ENCODE measurements at regions of chr12 and their contacts with region 1.

Region 1: DNA sequence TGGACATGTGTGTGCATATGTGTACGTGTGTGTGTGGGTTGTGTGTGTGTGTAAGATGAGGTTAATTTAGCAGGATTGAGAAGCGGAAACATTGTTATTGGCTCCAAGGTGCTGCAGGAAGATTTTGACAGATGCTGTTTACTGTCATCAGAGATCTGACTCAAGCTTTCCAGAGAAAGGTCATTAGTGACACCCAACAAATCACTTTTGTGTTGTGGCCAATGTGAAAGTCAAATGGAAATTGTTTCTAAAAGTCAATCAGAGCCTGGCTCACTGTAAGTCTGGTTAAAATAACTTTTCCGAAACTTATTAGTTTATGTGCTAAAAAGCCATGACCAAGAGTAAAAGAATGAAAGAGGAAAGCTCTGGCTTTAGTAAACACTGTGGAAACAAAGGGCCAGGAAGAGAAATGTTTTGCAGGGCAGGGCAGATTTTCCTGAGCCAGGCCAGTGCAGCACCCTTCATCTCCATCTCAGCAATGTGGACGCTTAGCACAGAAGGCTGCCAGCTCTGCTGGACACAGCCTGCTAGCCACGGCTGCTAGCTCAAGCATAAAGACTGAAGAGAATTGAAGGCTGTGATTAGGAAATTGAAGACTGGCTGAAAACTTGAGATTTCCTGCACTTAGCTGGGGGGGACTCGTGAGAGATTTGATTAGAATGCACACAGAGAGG is 235.8 kb downstream of the NEDD1 start:
- DNase-seq: peak; percentile 88
- H3K4me3 ChIP-seq: peak overlapping the region in 1 of 3 experiments; percentile 5
- H3K27ac ChIP-seq: peak overlapping the region; percentile 52
- H3K4me1 ChIP-seq: peaks cover 60% of the 10 kb centered on the region
- H3K27me3 ChIP-seq: no peaks in the 10 kb centered on the region
- CTCF ChIP-seq: no peak
- POLR2A ChIP-seq: no peak

Region 2: GRCh38 chr12:97075161-97075953 is 67.5 kb before region 1 on chr12:
- CTCF ChIA-PET with region 1: no interaction called
- POLR2A ChIA-PET with region 1: no interaction called
- dilution Hi-C with region 1: no loop called
- intact Hi-C with region 1: loop called (anchors 2 kb)
- DNase-seq: peak; percentile 81
- H3K4me3 ChIP-seq: peak overlapping the region in 1 of 3 experiments; percentile 32
- H3K27ac ChIP-seq: peak overlapping the region; percentile 66
- H3K4me1 ChIP-seq: peaks cover 16% of the 10 kb centered on the region
- H3K27me3 ChIP-seq: no peaks in the 10 kb centered on the region
- CTCF ChIP-seq: no peak
- POLR2A ChIP-seq: no peak

Region 3: DNA sequence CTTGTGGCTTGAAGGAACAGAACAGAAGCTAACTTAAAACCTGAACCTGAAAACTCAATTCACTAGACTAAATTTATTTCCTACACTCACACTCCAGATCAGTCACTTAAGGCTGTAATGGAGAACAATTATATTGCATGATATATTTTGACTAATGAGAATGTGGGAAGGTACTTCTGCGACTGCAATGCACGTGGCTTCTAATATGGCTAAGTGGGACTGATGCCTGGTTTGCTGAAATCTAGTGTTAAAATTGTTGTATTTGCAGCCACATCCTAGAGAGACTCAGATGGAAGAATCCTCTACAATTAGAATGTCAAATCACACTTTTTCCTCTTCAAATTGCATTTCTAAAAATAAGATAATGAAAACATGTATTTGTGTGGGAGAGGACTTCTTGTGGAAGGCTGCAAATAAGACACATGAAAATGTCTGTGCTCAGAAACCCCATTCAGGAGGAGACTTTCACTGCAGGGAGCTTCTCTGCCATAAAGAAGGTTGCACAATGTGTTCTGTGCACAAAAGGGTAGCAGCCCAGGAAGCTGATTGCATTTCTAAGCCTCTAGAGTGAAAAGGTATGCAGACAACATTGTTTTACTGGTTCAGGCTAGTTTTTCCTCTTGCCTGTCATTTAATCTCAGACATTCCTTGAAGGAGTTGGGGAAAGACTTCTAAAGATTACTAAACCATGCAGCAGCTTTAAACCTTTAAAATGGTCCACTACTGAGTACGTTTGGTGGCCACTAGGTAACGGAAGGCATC is 11.5 kb before region 1 on chr12:
- CTCF ChIA-PET with region 1: no interaction called
- POLR2A ChIA-PET with region 1: no interaction called
- dilution Hi-C with region 1: no loop called
- intact Hi-C with region 1: no loop called
- DNase-seq: no peak
- H3K4me3 ChIP-seq: no peak overlapping the region
- H3K27ac ChIP-seq: no peak overlapping the region
- H3K4me1 ChIP-seq: peaks cover 7% of the 10 kb centered on the region
- H3K27me3 ChIP-seq: peaks cover 2 to 3% of the 10 kb centered on the region in 2 experiments
- CTCF ChIP-seq: no peak
- POLR2A ChIP-seq: no peak

Region 4: GRCh38 chr12:97159362-97159761 is 16.5 kb after region 1 on chr12:
- CTCF ChIA-PET with region 1: no interaction called
- POLR2A ChIA-PET with region 1: no interaction called
- dilution Hi-C with region 1: no loop called
- intact Hi-C with region 1: no loop called
- DNase-seq: no peak
- H3K4me3 ChIP-seq: no peak overlapping the region
- H3K27ac ChIP-seq: no peak overlapping the region
- H3K4me1 ChIP-seq: no peaks in the 10 kb centered on the region
- H3K27me3 ChIP-seq: no peaks in the 10 kb centered on the region
- CTCF ChIP-seq: no peak
- POLR2A ChIP-seq: no peak

Region 5: DNA sequence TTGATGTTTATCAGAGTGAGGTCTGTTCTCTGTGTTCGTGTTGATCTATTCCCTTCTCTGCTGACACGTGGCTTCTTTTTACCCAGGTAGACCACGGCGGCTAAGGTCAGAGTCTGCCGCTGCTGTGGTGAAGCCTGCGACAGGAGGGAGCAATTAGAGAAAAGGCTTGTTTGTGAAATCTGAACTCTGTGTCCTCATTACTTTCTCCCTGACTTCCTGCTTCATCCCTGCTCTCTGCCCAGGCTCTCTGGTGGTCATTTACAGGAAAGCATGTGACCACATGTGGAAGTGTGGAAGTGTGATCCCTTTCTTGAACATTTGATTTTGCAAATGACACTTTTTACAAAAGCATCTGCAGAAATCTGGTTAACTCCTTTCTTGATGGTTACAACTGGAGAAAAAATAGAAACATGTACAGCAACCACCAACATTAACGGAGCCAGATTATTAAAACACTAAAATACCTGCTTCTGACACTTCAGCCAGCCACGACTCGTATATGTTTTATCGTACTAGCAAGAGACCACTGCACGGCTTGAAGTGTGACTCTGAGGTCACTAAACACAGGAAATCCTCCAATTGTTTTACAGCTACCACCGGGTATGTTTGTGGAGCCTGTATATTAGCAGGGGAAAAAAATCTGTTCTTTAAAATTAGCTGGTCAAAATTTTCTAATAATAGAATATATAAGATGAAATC is 983.9 kb after region 1 on chr12:
- CTCF ChIA-PET with region 1: no interaction called
- POLR2A ChIA-PET with region 1: no interaction called
- dilution Hi-C with region 1: no loop called
- intact Hi-C with region 1: loop called (anchors 2 kb)
- DNase-seq: peak; percentile 82
- H3K4me3 ChIP-seq: peak overlapping the region in 1 of 3 experiments; percentile 30
- H3K27ac ChIP-seq: peak overlapping the region; percentile 95
- H3K4me1 ChIP-seq: peaks cover 22% of the 10 kb centered on the region
- H3K27me3 ChIP-seq: no peaks in the 10 kb centered on the region
- CTCF ChIP-seq: no peak
- POLR2A ChIP-seq: no peak